PC-9 (cell line): ENCODE measurements at regions of chr20 and their contacts with region 1.

Region 1: GRCh38 chr20:44092551-44093248 is 94.3 kb downstream of the JPH2 start:
- DNase-seq: peak in 1 of 2 experiments; percentile 32
- H3K4me3 ChIP-seq: no peak overlapping the region
- H3K27ac ChIP-seq: no peak overlapping the region
- H3K4me1 ChIP-seq: peaks cover 1% of the 10 kb centered on the region; the same call in 1 of the 2 replicates
- H3K27me3 ChIP-seq: no peaks in the 10 kb centered on the region
- CTCF ChIP-seq: peak; percentile 87

Region 2: GRCh38 chr20:43983359-43983758 is 109.3 kb before region 1 on chr20:
- CTCF ChIA-PET with region 1: no interaction called
- POLR2A ChIA-PET with region 1: no interaction called
- intact Hi-C with region 1: no loop called
- DNase-seq: no peak
- H3K4me3 ChIP-seq: no peak overlapping the region
- H3K27ac ChIP-seq: 0 out of 2 replicates have a peak overlapping the region, but pooled peaks have one; percentile 10
- H3K4me1 ChIP-seq: no peaks in the 10 kb centered on the region
- H3K27me3 ChIP-seq: no peaks in the 10 kb centered on the region
- CTCF ChIP-seq: peak; percentile 65

Region 3: DNA sequence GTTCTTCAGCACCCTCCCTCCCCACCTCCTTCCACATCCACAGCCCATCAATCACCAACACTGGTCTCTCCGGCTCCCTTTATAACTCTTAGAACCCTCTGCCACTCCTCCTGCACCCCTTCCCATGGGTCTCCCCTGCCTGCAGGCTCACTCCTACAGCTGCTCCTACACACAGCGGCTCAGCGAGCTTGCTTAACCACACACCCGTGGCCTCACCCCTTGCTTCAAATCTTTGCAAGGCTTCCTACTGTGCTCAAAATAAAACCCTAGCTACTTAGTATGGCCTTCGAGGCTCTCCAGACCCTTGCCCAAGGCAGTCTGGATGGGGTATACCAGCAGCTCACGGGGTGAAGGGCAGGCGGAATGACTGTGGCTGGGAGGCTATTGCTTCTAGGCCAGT is 30.6 kb after region 1 on chr20:
- CTCF ChIA-PET with region 1: no interaction called
- POLR2A ChIA-PET with region 1: interaction called, 12 read pairs
- intact Hi-C with region 1: no loop called
- DNase-seq: no peak
- H3K4me3 ChIP-seq: no peak overlapping the region
- H3K27ac ChIP-seq: no peak overlapping the region
- H3K4me1 ChIP-seq: no peaks in the 10 kb centered on the region
- H3K27me3 ChIP-seq: no peaks in the 10 kb centered on the region
- CTCF ChIP-seq: no peak

Region 4: DNA sequence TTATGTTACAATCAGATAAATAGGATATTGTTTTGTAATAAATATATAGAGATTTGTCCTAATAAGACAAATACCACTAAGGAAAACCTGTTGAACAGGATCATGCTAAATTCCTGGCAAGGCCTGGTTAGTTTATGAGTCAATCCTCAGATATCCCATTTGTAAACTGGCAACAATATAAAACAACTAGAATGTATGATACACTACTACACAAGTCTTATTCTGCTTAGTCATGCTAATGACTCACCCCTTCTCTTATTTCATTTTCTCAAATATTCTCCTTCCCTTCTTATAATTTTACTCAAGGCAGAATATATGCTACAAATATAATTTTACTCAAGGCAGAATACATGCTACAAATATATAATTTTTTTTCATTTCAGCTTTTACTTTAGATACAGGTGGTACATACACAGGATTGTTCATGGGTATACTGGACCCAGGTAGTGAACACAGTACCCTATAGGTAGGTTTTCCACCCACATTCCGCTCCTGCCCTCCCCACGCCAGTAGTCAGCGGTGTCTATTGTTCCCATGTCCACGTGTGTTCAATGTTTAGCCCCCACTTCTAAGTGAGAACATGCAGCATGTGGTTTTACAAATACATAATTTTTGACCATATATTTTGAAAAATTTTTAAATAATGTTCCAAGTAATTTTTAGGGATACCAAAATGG is 111.6 kb after region 1 on chr20:
- CTCF ChIA-PET with region 1: no interaction called
- POLR2A ChIA-PET with region 1: no interaction called
- intact Hi-C with region 1: no loop called
- DNase-seq: peak; percentile 47 to 100
- H3K4me3 ChIP-seq: peak overlapping the region; percentile 49; the same call in 1 of the 2 replicates
- H3K27ac ChIP-seq: peak overlapping the region; percentile 96
- H3K4me1 ChIP-seq: peaks cover 84% of the 10 kb centered on the region
- H3K27me3 ChIP-seq: no peaks in the 10 kb centered on the region
- CTCF ChIP-seq: 0 out of 2 replicates have a peak, but pooled peaks have one; percentile 14

Region 5: GRCh38 chr20:44683263-44684046 is 590.8 kb after region 1 on chr20:
- CTCF ChIA-PET with region 1: no interaction called
- POLR2A ChIA-PET with region 1: no interaction called
- intact Hi-C with region 1: no loop called
- DNase-seq: peak; percentile 66 to 76
- H3K4me3 ChIP-seq: no peak overlapping the region
- H3K27ac ChIP-seq: no peak overlapping the region
- H3K4me1 ChIP-seq: peaks cover 16% of the 10 kb centered on the region
- H3K27me3 ChIP-seq: no peaks in the 10 kb centered on the region
- CTCF ChIP-seq: peak; percentile 85